ENCODE measurements at regions of chr17 and their contacts with region 1.

Region 1: GRCh38 chr17:80195731-80196529 is 24.2 kb downstream of the SGSH start:
- DNase-seq: peak; percentile 24
- H3K4me3 ChIP-seq: no peak overlapping the region
- H3K27ac ChIP-seq: no peak overlapping the region
- H3K4me1 ChIP-seq: no peaks in the 10 kb centered on the region
- H3K27me3 ChIP-seq: peaks cover 0 to 5% of the 10 kb centered on the region in 2 experiments
- CTCF ChIP-seq: peak; percentile 89 to 92
- POLR2A ChIP-seq: no peak

Region 2: GRCh38 chr17:79844869-79845600 is 350.9 kb before region 1 on chr17:
- CTCF ChIA-PET with region 1: no interaction called
- POLR2A ChIA-PET with region 1: no interaction called
- dilution Hi-C with region 1: no loop called
- intact Hi-C with region 1: no loop called
- DNase-seq: no peak
- H3K4me3 ChIP-seq: no peak overlapping the region
- H3K27ac ChIP-seq: no peak overlapping the region
- H3K4me1 ChIP-seq: peaks cover 11% of the 10 kb centered on the region
- H3K27me3 ChIP-seq: peaks cover 37 to 48% of the 10 kb centered on the region in 2 experiments
- CTCF ChIP-seq: peak; percentile 56 to 88
- POLR2A ChIP-seq: no peak

Region 3: GRCh38 chr17:80177986-80178590 is 17.8 kb before region 1 on chr17:
- CTCF ChIA-PET with region 1: interaction called, 18 read pairs
- POLR2A ChIA-PET with region 1: no interaction called
- dilution Hi-C with region 1: no loop called
- intact Hi-C with region 1: no loop called
- DNase-seq: peak; percentile 39
- H3K4me3 ChIP-seq: no peak overlapping the region
- H3K27ac ChIP-seq: no peak overlapping the region
- H3K4me1 ChIP-seq: peaks cover 7% of the 10 kb centered on the region
- H3K27me3 ChIP-seq: peaks cover 13 to 18% of the 10 kb centered on the region in 2 experiments
- CTCF ChIP-seq: no peak
- POLR2A ChIP-seq: no peak

Region 4: DNA sequence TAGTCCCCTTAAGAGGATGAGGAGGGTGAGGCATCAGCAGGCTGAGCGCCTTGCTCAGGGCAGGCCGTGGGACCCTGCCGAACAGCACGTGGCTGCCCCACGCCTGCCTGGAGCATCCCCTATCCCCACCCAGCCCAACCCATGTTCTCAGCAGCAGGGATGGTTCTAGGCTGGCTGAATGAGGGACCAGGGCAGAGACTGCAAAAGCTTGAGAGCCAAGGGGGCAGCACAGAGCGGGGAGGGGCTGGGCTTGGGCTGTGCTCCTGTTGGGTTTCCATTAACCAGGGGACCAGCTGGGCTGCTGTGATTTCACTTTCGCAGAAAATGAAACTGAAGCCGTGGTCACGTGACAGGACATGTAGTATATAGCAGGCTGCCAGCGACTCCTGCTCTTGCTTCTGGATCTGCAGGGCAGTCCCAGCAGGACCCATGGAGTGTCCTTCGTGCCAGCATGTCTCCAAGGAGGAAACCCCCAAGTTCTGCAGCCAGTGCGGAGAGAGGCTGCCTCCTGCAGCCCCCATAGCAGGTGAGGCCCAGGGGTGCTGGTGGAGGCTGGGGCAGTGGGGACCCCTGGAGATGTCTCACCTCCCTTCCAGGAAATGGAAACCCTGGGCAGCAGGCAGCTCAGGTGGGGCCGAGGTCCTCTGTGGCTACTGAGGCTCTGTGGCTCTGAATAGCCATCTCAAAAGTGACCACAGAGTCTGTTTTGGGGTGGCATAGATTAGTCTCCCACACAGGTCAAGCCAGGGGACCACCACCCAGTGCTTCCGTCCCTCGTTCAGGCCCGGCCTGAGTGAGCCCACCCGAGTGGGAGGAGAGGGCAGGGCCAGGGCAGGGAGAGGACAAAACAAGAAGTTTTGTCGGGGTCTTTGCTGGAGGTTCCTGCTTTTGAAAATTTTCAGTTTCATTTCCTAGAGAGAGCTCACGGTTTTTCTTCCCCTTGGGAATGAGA is 67.6 kb after region 1 on chr17:
- CTCF ChIA-PET with region 1: interaction called, 6 read pairs
- POLR2A ChIA-PET with region 1: no interaction called
- dilution Hi-C with region 1: no loop called
- intact Hi-C with region 1: loop called (anchors 5 kb)
- DNase-seq: peak; percentile 86
- H3K4me3 ChIP-seq: peak overlapping the region in 2 of 3 experiments; percentile 1 to 12
- H3K27ac ChIP-seq: no peak overlapping the region
- H3K4me1 ChIP-seq: peaks cover 30% of the 10 kb centered on the region
- H3K27me3 ChIP-seq: no peaks in the 10 kb centered on the region
- CTCF ChIP-seq: peak in 1 of 2 donors; percentile 18
- POLR2A ChIP-seq: peak; percentile 77

Region 5: GRCh38 chr17:80292521-80292971 is 96.6 kb after region 1 on chr17:
- CTCF ChIA-PET with region 1: interaction called, 32 read pairs
- POLR2A ChIA-PET with region 1: no interaction called
- dilution Hi-C with region 1: no loop called
- intact Hi-C with region 1: no loop called
- DNase-seq: no peak
- H3K4me3 ChIP-seq: no peak overlapping the region
- H3K27ac ChIP-seq: no peak overlapping the region
- H3K4me1 ChIP-seq: no peaks in the 10 kb centered on the region
- H3K27me3 ChIP-seq: no peaks in the 10 kb centered on the region
- CTCF ChIP-seq: no peak
- POLR2A ChIP-seq: no peak

Region 6: GRCh38 chr17:80364216-80364618 is 168.3 kb after region 1 on chr17:
- CTCF ChIA-PET with region 1: interaction called, 46 read pairs
- POLR2A ChIA-PET with region 1: no interaction called
- dilution Hi-C with region 1: no loop called
- intact Hi-C with region 1: loop called (anchors 1 kb)
- DNase-seq: no peak
- H3K4me3 ChIP-seq: no peak overlapping the region
- H3K27ac ChIP-seq: no peak overlapping the region
- H3K4me1 ChIP-seq: no peaks in the 10 kb centered on the region
- H3K27me3 ChIP-seq: no peaks in the 10 kb centered on the region
- CTCF ChIP-seq: peak; percentile 24 to 43
- POLR2A ChIP-seq: no peak